ENCODE measurements at regions of chr19 and their contacts with region 1.

Region 1: DNA sequence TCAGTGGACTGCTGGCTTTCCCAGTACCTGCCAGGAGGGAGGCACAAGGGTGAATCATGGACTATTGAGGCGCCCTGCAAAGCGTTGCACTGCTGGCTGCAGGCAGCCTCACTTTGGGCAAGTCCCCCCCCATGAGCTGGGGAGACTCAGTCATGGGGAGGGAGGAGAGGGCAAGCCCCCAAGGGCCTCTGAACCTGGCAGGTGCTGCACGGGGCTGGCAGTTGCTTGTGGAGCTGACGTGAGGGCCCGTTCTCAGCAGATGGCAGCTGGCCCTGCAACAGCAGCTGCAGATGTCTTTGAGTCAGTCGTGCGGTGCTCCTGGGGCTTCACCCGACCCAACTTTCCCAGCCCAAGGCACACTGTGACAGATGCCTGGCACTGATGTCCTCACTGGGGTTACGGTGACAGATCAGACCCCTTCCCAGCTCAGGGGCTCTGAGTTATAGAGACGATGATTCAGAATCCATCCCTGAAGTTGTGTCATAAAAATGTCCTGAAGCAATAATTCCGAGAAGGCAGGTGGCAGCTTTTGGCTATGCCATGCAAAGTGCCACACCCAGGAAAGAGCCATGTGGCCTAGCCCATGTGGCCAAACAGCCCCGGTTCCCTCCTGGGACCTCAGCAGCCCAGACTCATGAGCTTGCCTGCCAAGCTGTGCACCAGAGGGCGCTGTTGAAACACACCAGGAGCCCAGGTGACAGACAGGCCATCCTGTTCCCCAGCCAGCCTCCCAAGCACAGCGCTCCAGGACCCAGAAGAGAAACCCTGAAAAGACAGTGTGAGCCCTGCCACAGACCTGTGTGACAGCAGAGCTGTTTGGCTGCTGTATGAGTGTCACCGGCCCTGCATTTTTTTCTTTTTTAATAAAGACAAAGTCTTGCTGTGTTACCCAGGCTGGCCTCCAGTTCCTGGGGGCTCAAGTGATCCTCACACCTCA is 53.6 kb upstream of the LDLR start:
- DNase-seq: peak; percentile 96
- H3K4me3 ChIP-seq: no peak overlapping the region
- H3K27ac ChIP-seq: peak overlapping the region; percentile 27 to 48 (median 32)
- H3K4me1 ChIP-seq: peaks cover 0 to 15% (median 9%) of the 10 kb centered on the region in 4 donors
- H3K27me3 ChIP-seq: no peaks in the 10 kb centered on the region
- CTCF ChIP-seq: peak; percentile 79 to 89 (median 84)
- EP300 ChIP-seq: no peak
- POLR2A ChIP-seq: no peak

Region 2: DNA sequence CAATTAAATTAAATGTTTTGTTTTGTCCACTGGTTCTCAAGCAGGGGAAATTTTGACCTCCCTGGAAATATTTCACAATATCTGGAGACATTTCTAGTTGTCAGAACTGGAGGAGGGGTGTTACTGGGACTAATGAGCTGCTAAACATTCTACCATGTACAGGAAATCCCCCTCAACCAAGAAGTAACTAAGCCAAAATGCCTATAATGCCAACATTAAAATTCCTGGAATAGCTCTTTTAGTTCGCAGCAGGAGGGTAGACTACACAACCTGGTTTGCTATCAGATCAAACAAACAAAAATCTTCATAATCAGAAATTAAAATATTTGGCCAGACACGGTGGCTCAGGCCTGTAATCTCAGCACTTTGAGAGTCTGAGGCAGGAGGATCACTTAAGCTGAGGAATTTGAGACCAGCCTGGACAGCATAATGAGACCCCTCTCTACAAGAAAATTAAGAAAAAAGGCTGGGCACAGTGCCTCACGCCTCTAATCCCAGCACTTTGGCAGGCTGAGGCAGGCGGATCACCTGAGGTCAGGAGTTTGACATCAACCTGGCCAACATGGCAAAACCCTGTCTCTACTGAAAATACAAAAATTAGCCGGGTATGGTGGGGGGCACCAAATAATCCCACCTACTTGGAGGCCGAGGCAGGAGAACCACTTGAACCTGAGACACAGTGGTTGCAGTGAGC is 88.6 kb before region 1 on chr19:
- intact Hi-C with region 1: loop called (anchors 10 kb)
- DNase-seq: no peak
- H3K4me3 ChIP-seq: no peak overlapping the region
- H3K27ac ChIP-seq: no peak overlapping the region
- H3K4me1 ChIP-seq: peaks cover 0 to 4% (median 3%) of the 10 kb centered on the region in 4 donors
- H3K27me3 ChIP-seq: no peaks in the 10 kb centered on the region
- CTCF ChIP-seq: no peak
- EP300 ChIP-seq: no peak
- POLR2A ChIP-seq: no peak

Region 3: DNA sequence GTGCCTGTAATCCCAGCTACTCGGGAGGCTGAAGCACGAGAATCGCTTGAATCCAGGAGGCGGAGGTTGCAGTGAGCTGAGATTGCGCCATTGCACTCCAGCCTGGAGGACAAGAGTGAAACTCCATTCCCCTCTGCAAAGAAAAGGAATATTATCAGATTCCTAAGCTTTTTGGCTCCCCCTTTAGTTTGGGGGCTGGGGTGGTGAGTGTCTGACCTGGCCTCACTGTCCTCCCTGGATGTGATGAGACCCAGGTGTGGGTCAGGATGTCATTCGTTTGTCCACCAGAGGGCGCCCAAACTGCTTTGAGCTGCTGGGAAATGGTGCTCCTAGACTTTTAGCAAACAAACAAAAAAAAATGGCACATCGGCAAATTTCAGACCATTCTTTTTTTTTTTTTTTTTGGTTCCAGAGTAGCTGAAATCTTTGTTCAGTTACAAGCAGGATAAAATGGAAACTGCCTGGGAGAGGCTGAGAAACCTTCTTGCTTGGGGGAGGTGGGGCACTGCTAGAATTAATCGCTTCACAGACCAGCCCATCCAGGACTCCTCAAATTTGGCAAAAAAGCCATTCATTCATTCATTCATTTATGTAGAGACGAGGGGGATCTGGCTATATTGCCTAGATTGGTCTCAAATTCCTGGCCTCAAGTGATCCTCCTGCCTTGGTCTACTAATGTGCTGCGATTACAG is 90.4 kb after region 1 on chr19:
- intact Hi-C with region 1: loop called (anchors 1 kb)
- DNase-seq: peak; percentile 94
- H3K4me3 ChIP-seq: no peak overlapping the region
- H3K27ac ChIP-seq: peak overlapping the region in 2 of 4 donors; percentile 28 to 44
- H3K4me1 ChIP-seq: peaks cover 0 to 16% (median 10%) of the 10 kb centered on the region in 4 donors
- H3K27me3 ChIP-seq: no peaks in the 10 kb centered on the region
- CTCF ChIP-seq: peak; percentile 68 to 79 (median 75)
- EP300 ChIP-seq: no peak
- POLR2A ChIP-seq: no peak

Region 4: DNA sequence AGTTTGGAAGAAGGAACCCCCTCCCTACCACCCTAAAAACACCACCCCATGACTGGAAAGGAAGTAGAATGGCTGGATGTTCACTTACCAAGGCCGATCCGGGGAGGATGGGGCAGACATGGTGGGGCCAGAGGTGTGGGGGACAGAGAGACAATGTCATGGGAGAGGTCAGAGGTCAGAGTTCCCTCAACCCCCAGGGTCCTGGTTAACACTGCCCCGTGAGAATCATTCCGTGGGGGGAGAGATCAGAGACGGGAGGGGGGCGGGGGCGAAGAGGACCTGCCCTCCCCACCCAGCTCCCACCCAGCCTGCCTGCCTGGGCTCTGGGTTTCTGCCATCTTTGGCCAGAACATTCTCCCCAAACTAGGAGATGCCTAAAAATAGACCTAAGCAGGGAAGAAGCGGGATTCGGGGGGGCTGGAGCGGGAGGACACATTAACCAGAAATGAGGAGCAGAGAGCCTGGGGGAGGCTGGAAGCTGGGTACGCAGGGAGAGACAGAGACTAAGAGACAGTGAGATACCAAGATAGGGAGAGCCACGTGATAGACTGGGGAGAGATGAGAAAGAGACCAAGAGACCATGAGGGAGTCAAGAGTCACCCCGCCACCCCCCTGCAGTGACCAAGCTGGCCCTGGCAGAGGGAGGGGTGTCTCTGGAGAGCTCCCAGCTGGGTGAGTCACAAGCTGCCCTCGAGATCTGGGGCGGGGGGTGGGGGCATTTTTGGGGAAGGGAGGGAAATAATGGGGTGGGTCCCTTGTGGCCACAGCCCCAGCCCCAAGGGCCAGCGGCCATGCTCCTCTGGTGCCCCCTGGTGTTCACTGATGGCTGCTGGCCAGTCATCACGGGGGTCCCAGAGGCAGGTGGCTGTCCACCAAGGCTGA is 167.7 kb after region 1 on chr19:
- intact Hi-C with region 1: loop called (anchors 2 kb)
- DNase-seq: peak; percentile 97
- H3K4me3 ChIP-seq: peak overlapping the region in 3 of 4 donors; percentile 31 to 45 (median 43)
- H3K27ac ChIP-seq: peak overlapping the region; percentile 91 to 98 (median 94)
- H3K4me1 ChIP-seq: peaks cover 0 to 56% (median 44%) of the 10 kb centered on the region in 4 donors
- H3K27me3 ChIP-seq: no peaks in the 10 kb centered on the region
- CTCF ChIP-seq: peak; percentile 89 to 96 (median 96)
- EP300 ChIP-seq: peak in 3 of 4 donors; percentile 49 to 80 (median 69)
- POLR2A ChIP-seq: no peak

Measured in sigmoid colon (tissue), 7 donors.